ENCODE measurements at regions of chr12 and their contacts with region 1.

Region 1: GRCh38 chr12:26937875-26938700 is at the starts of genes FGFR1OP2 and INTS13:
- DNase-seq: peak; percentile 99
- ATAC-seq: peak; percentile 93
- total RNA-seq, gene FGFR1OP2: 24.6 to 31.5 TPM
- total RNA-seq, gene INTS13: 11.5 to 12.9 TPM

Region 2: DNA sequence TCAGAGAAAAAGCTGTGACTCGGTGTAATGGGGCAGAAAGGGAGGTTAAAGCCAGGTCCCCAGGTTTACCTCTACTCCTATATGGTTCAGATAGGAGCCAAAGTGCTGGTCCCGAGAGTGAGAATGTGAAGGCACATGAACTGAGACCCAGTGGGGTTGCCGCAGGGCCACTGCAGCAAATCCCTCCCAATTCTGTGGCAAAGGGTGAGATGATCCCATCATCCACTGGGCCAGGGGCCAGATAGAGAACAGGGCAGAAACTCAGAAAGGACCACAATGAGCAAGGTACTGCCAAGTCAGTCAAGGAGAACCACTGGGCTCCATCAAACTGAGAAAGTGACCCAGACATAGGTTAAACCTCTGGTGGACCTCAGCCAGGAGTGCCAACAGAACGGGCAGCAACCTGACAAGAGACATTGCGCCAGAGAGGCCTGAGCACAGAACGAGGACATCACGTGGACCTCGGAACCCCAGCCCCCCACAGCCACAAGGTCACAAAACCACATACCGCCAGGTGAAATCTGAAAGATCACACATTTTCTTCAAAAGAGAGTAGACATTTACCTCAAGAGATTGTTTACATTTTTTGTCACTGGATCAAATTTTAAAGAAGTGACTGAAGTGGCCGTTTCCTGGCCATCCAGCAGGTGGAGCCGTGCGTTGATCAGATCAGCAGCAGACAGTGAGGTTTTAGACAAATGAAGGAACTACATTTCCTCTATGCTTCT is 84.6 kb before region 1 on chr12:
- intact Hi-C with region 1: no loop called
- DNase-seq: peak; percentile 44 to 75
- ATAC-seq: peak; percentile 89

Region 3: GRCh38 chr12:26987634-26988424 is 49.7 kb after region 1 on chr12:
- intact Hi-C with region 1: no loop called
- DNase-seq: no peak
- ATAC-seq: no peak

Region 4: GRCh38 chr12:27014085-27014858 is 76.2 kb after region 1 on chr12 and contains the start of gene TM7SF3:
- intact Hi-C with region 1: loop called in 1 of 2 experiments (anchors 5 kb)
- DNase-seq: peak; percentile 95 to 98
- ATAC-seq: peak; percentile 96
- total RNA-seq, gene TM7SF3: 45.2 to 48.3 TPM

Measured in left colon (tissue), 2 donors.